Activated CD4-positive, alpha-beta T cell treated with anti-CD3 and anti-CD28 coated beads, Interleukin-2, amount 10 ng/mL, durations not matched to agents 24 days and 14 days (primary cell): ENCODE measurements at regions of chr6 and their contacts with region 1.

Region 1: GRCh38 chr6:16514249-16514648 is 247.0 kb downstream of the ATXN1 start:
- DNase-seq: peak; percentile 82
- H3K4me3 Mint-ChIP-seq: peak overlapping the region; percentile 52
- H3K27ac Mint-ChIP-seq: peak overlapping the region; percentile 84
- H3K4me1 Mint-ChIP-seq: peaks cover 70% of the 10 kb centered on the region
- H3K27me3 Mint-ChIP-seq: no peaks in the 10 kb centered on the region

Region 2: DNA sequence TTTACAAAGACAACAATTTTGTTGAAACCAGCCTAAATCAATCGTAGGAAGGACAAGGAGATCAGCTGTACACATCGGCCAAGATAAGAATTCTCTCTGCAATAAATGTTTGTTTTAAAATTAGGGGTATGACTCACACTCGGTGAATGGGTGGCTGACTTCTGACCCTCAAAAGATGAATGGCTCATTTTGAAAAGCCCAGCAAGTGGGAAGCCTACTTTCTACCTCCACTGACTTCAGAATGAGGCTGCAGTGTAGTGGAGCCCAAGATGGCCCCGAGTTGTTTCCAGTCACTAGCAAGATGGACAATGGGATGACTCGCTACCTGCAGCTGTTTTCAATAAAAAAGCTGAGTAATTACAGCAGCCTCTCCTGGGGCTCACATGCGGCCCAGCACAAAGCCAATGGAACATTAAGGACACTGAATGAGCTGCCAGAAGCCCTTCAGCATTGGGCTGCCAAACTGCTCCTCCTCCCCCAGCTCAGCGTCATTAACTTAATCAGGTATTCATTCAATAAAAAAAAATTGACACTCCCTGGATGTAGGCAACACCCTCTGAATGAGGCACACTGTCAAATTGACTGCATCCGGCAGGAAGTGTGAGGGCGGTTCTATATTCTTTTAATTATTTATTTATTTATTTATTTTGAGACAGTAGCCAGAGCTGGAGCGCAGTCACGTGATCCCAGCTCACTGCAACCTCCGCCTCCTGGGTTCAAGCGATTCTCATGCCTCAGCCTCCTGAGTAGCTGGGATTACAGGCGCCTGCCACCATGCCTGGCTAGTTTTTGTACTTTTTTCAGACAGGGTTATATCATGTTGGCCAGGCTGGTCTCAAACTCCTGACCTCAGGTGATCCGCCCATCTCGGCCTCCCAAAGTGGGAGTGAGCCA is 168.6 kb before region 1 on chr6:
- intact Hi-C with region 1: no loop called
- DNase-seq: no peak
- H3K4me3 Mint-ChIP-seq: no peak overlapping the region
- H3K27ac Mint-ChIP-seq: no peak overlapping the region
- H3K4me1 Mint-ChIP-seq: peaks cover 9% of the 10 kb centered on the region
- H3K27me3 Mint-ChIP-seq: no peaks in the 10 kb centered on the region

Region 3: GRCh38 chr6:16380220-16380809 is 133.9 kb before region 1 on chr6:
- intact Hi-C with region 1: no loop called
- DNase-seq: no peak
- H3K4me3 Mint-ChIP-seq: no peak overlapping the region
- H3K27ac Mint-ChIP-seq: no peak overlapping the region
- H3K4me1 Mint-ChIP-seq: peaks cover 5% of the 10 kb centered on the region
- H3K27me3 Mint-ChIP-seq: no peaks in the 10 kb centered on the region

Region 4: DNA sequence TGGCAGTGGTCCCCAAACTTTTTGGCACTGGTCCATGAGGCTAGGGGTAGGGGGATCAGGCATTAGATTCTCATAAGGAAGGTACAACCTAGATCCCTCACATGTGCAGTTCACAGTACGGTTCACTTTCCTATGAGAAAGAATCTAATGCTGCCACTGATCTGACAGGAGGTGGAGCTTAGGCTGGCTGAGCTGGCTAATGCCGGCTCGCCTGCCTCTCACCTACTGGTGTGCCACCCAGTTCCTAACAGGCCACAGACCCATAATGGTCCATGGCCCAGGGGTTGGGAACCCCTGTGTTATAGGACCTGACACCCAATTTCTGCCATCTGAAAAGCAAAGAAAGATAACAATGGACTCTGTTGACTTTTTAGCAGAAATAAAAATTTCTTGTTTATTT is 76.3 kb before region 1 on chr6:
- intact Hi-C with region 1: loop called (anchors 5 kb)
- DNase-seq: peak; percentile 67
- H3K4me3 Mint-ChIP-seq: peak overlapping the region; percentile 76
- H3K27ac Mint-ChIP-seq: peak overlapping the region; percentile 82
- H3K4me1 Mint-ChIP-seq: peaks cover 56% of the 10 kb centered on the region
- H3K27me3 Mint-ChIP-seq: no peaks in the 10 kb centered on the region

Region 5: GRCh38 chr6:16471222-16471909 is 42.9 kb before region 1 on chr6:
- intact Hi-C with region 1: loop called (anchors 2 kb)
- DNase-seq: no peak
- H3K4me3 Mint-ChIP-seq: peak overlapping the region; percentile 27
- H3K27ac Mint-ChIP-seq: peak overlapping the region; percentile 82
- H3K4me1 Mint-ChIP-seq: peaks cover 58% of the 10 kb centered on the region
- H3K27me3 Mint-ChIP-seq: no peaks in the 10 kb centered on the region

Region 6: DNA sequence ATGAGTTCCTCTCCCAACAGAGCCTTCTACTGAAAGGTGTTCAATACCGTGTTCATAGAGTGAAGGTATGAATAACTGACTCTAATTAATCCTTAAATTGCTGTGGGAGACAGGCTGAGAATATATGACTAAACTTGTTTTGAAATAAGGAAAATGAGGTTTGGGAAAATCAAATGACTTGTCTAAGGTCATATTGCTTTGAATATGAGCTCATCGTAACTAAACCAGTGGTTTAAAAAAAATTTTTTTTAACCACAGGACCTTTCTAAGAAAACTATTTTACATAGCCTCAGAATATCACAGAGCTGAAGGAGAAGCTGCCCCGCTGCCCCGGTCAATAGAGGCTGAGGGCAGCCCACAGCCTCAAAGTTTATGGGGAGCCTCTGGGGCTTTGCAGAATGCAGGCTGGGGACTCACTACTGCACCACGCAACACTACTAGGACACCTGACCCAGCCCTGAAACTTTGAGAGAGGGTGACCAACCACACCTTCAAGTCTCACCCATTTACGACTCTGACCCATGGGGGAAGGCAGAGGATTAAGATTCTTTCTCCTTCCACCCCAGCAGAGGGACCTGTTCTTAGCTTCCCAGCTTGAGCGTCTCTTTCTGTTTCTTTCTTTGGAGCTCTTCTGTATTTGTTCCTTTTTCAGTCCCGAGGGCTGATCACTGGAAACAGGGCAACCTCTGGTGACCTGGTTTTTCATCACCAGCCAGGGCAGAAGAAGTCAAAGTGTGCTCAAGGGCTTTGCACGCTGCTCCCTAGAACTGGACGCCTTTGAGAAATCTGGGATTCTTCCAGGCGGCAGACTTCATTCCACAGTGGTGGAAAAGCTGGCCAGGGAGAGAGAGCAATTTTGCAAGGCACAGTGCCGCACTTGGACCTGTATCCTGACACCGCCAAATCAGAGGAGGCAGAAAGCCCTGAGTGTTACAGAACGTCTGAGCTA is 26.8 kb after region 1 on chr6:
- intact Hi-C with region 1: no loop called
- DNase-seq: no peak
- H3K4me3 Mint-ChIP-seq: no peak overlapping the region
- H3K27ac Mint-ChIP-seq: peak overlapping the region; percentile 60
- H3K4me1 Mint-ChIP-seq: peaks cover 32% of the 10 kb centered on the region
- H3K27me3 Mint-ChIP-seq: no peaks in the 10 kb centered on the region

Region 7: GRCh38 chr6:16576451-16577368 is 62.5 kb after region 1 on chr6:
- intact Hi-C with region 1: loop called (anchors 5 kb)
- DNase-seq: no peak
- H3K4me3 Mint-ChIP-seq: no peak overlapping the region
- H3K27ac Mint-ChIP-seq: no peak overlapping the region
- H3K4me1 Mint-ChIP-seq: peaks cover 22% of the 10 kb centered on the region
- H3K27me3 Mint-ChIP-seq: no peaks in the 10 kb centered on the region

Region 8: DNA sequence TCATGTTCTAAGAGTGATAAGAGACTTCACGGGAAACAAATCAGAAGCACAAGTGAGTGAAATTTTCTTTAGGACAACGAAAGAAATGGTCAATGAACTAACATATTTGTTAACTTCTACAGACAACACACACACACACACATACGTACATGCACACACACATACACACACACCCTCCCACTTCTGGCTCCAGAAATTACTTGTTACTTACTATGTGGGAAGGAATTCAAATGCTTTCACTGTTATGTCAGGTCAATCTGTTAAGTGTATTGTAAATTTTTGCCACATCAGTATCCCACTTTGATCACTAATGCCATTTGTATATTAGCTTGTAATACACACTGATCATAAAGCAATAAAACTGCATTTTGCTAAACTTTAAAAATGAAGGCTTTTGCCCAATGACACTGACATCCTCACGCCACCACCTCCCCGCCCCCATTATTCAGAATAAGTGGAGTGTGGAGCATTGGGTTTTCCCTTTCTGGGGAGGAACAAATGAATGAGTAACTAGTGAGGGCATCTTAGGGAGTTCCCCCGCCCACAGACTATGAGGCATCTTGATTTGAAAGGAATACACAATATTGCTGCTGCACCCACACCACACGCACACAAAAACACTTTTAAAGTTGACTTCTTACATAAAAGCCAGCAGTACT is 170.8 kb after region 1 on chr6:
- intact Hi-C with region 1: loop called (anchors 5 kb)
- DNase-seq: peak; percentile 89
- H3K4me3 Mint-ChIP-seq: peak overlapping the region; percentile 67
- H3K27ac Mint-ChIP-seq: peak overlapping the region; percentile 92
- H3K4me1 Mint-ChIP-seq: peaks cover 82% of the 10 kb centered on the region
- H3K27me3 Mint-ChIP-seq: no peaks in the 10 kb centered on the region

Region 9: DNA sequence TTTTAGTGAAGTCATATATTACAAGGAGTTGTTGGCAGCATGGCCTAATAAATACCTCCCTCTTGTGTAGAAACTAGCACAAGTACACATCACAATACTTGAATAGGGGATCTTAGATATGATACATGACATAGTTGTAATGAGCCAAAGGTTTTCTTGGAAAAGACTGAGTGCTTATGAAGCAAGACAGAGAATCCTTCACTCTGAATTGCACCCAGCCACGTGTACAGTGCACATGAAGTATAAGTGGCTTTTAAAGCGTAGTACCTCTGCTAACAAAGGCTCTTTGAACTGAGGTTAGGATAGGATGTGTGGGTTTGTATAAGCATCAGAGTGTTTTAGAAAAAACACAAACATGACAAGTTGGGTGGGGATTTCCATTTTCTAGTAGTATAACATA is 442.1 kb after region 1 on chr6:
- intact Hi-C with region 1: loop called (anchors 10 kb)
- DNase-seq: peak; percentile 63
- H3K4me3 Mint-ChIP-seq: peak overlapping the region; percentile 21
- H3K27ac Mint-ChIP-seq: peak overlapping the region; percentile 78
- H3K4me1 Mint-ChIP-seq: peaks cover 28% of the 10 kb centered on the region
- H3K27me3 Mint-ChIP-seq: peaks cover 21% of the 10 kb centered on the region

Region 10: GRCh38 chr6:17015144-17015543 is 500.9 kb after region 1 on chr6:
- intact Hi-C with region 1: loop called (anchors 5 kb)
- DNase-seq: peak; percentile 71
- H3K4me3 Mint-ChIP-seq: peak overlapping the region; percentile 52
- H3K27ac Mint-ChIP-seq: no peak overlapping the region
- H3K4me1 Mint-ChIP-seq: peaks cover 10% of the 10 kb centered on the region
- H3K27me3 Mint-ChIP-seq: peaks cover 37% of the 10 kb centered on the region

Region 11: GRCh38 chr6:17318435-17319165 is 804.4 kb after region 1 on chr6:
- intact Hi-C with region 1: no loop called
- DNase-seq: no peak
- H3K4me3 Mint-ChIP-seq: no peak overlapping the region
- H3K27ac Mint-ChIP-seq: no peak overlapping the region
- H3K4me1 Mint-ChIP-seq: no peaks in the 10 kb centered on the region
- H3K27me3 Mint-ChIP-seq: no peaks in the 10 kb centered on the region